ENCODE measurements at regions of chr5 and their contacts with region 1.

Region 1: GRCh38 chr5:168987543-168988300 is 313.2 kb downstream of the SLIT3 start:
- DNase-seq: peak; percentile 87
- H3K4me3 Mint-ChIP-seq: no peak overlapping the region
- H3K27ac Mint-ChIP-seq: no peak overlapping the region
- H3K4me1 Mint-ChIP-seq: no peaks in the 10 kb centered on the region
- H3K27me3 Mint-ChIP-seq: peaks cover 22% of the 10 kb centered on the region
- CTCF ChIP-seq: peak; percentile 93

Region 2: GRCh38 chr5:168592014-168592418 is 395.7 kb before region 1 on chr5:
- CTCF ChIA-PET with region 1: no interaction called
- POLR2A ChIA-PET with region 1: no interaction called
- intact Hi-C with region 1: no loop called
- DNase-seq: peak; percentile 59
- H3K4me3 Mint-ChIP-seq: no peak overlapping the region
- H3K27ac Mint-ChIP-seq: no peak overlapping the region
- H3K4me1 Mint-ChIP-seq: peaks cover 5% of the 10 kb centered on the region
- H3K27me3 Mint-ChIP-seq: peaks cover 20% of the 10 kb centered on the region
- CTCF ChIP-seq: no peak

Region 3: GRCh38 chr5:168706655-168707069 is 281.1 kb before region 1 on chr5:
- CTCF ChIA-PET with region 1: interaction called, 27 read pairs
- POLR2A ChIA-PET with region 1: no interaction called
- intact Hi-C with region 1: loop called (anchors 1 kb)
- DNase-seq: peak; percentile 60
- H3K4me3 Mint-ChIP-seq: no peak overlapping the region
- H3K27ac Mint-ChIP-seq: no peak overlapping the region
- H3K4me1 Mint-ChIP-seq: no peaks in the 10 kb centered on the region
- H3K27me3 Mint-ChIP-seq: no peaks in the 10 kb centered on the region
- CTCF ChIP-seq: peak; percentile 53

Region 4: GRCh38 chr5:168947212-168947868 is 40.4 kb before region 1 on chr5:
- CTCF ChIA-PET with region 1: interaction called, 17 read pairs
- POLR2A ChIA-PET with region 1: no interaction called
- intact Hi-C with region 1: no loop called
- DNase-seq: peak; percentile 77
- H3K4me3 Mint-ChIP-seq: no peak overlapping the region
- H3K27ac Mint-ChIP-seq: no peak overlapping the region
- H3K4me1 Mint-ChIP-seq: no peaks in the 10 kb centered on the region
- H3K27me3 Mint-ChIP-seq: no peaks in the 10 kb centered on the region
- CTCF ChIP-seq: peak; percentile 83

Region 5: GRCh38 chr5:169009123-169009522 is 21.4 kb after region 1 on chr5:
- CTCF ChIA-PET with region 1: interaction called, 34 read pairs
- POLR2A ChIA-PET with region 1: no interaction called
- intact Hi-C with region 1: no loop called
- DNase-seq: no peak
- H3K4me3 Mint-ChIP-seq: no peak overlapping the region
- H3K27ac Mint-ChIP-seq: no peak overlapping the region
- H3K4me1 Mint-ChIP-seq: peaks cover 11% of the 10 kb centered on the region
- H3K27me3 Mint-ChIP-seq: no peaks in the 10 kb centered on the region
- CTCF ChIP-seq: no peak

Region 6: GRCh38 chr5:169286572-169287300 is 299.0 kb after region 1 on chr5:
- CTCF ChIA-PET with region 1: interaction called, 11 read pairs
- POLR2A ChIA-PET with region 1: no interaction called
- intact Hi-C with region 1: no loop called
- DNase-seq: no peak
- H3K4me3 Mint-ChIP-seq: no peak overlapping the region
- H3K27ac Mint-ChIP-seq: no peak overlapping the region
- H3K4me1 Mint-ChIP-seq: peaks cover 7% of the 10 kb centered on the region
- H3K27me3 Mint-ChIP-seq: no peaks in the 10 kb centered on the region
- CTCF ChIP-seq: no peak

Region 7: DNA sequence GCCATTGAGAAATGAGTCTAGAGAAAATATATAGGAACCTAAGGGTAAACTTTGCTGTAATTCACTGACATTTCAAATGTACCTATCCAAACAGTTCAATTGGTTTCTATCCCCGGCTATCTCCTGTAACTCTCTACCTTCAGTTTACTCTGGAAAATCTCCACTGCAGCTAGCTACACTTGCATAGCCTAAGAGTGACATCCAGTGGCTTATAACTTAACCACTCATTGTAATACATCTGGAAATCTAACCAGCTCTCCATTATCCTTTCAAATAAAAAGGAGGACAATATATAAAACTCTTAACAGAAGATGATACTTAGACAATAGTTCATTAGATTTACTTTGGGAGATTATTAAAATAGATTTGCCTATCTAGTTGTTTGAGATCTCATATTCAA is 560.6 kb after region 1 on chr5:
- CTCF ChIA-PET with region 1: interaction called, 118 read pairs
- POLR2A ChIA-PET with region 1: interaction called, 3 read pairs
- intact Hi-C with region 1: loop called (anchors 1 kb)
- DNase-seq: peak; percentile 55
- H3K4me3 Mint-ChIP-seq: no peak overlapping the region
- H3K27ac Mint-ChIP-seq: no peak overlapping the region
- H3K4me1 Mint-ChIP-seq: no peaks in the 10 kb centered on the region
- H3K27me3 Mint-ChIP-seq: peaks cover 30% of the 10 kb centered on the region
- CTCF ChIP-seq: peak; percentile 78

Measured in MCF 10A (cell line).